ENCODE measurements at regions of chr5 and their contacts with region 1.

Region 1: GRCh38 chr5:178732281-178732680 is 1.8 kb upstream of the ZNF354A start:
- DNase-seq: no peak
- ATAC-seq: no peak
- H3K4me3 ChIP-seq: no peak overlapping the region
- H3K27ac ChIP-seq: no peak overlapping the region
- H3K4me1 ChIP-seq: peaks cover 8% of the 10 kb centered on the region; the same call in 1 of the 2 replicates
- H3K27me3 ChIP-seq: no peaks in the 10 kb centered on the region
- CTCF ChIP-seq: no peak
- EP300 ChIP-seq: no peak
- POLR2A ChIP-seq: no peak
- RAD21 ChIP-seq: no peak

Region 2: GRCh38 chr5:178626484-178627258 is 105.6 kb before region 1 on chr5 and contains the start of gene CLK4:
- CTCF ChIA-PET with region 1: no interaction called
- POLR2A ChIA-PET with region 1: interaction called, 3 read pairs
- in situ Hi-C with region 1: no loop called
- intact Hi-C with region 1: loop called (anchors 5 kb)
- DNase-seq: peak; percentile 78
- ATAC-seq: peak; percentile 78
- H3K4me3 ChIP-seq: peak within 1 kb of the TSS; percentile 88 to 95 (median 91)
- H3K27ac ChIP-seq: peak within 1 kb of the TSS; percentile 90
- H3K4me1 ChIP-seq: peaks cover 60% of the 10 kb centered on the region
- H3K27me3 ChIP-seq: no peaks in the 10 kb centered on the region; a peak in 1 of 5 replicates
- CTCF ChIP-seq: 0 out of 2 replicates have a peak, but pooled peaks have one; percentile 3
- EP300 ChIP-seq: no peak
- POLR2A ChIP-seq: peak; percentile 84 to 87
- RAD21 ChIP-seq: no peak; the same call in 1 of the 2 replicates
- total RNA-seq, gene CLK4: 9.5 and 18.4 TPM in 2 replicates

Region 3: GRCh38 chr5:178940569-178941360 is 208.5 kb after region 1 on chr5 and contains the start of gene ZNF454:
- CTCF ChIA-PET with region 1: no interaction called
- POLR2A ChIA-PET with region 1: no interaction called
- in situ Hi-C with region 1: no loop called
- intact Hi-C with region 1: no loop called
- DNase-seq: no peak
- ATAC-seq: no peak
- H3K4me3 ChIP-seq: no peak within 1 kb of the TSS
- H3K27ac ChIP-seq: no peak within 1 kb of the TSS
- H3K4me1 ChIP-seq: no peaks in the 10 kb centered on the region
- H3K27me3 ChIP-seq: no peaks in the 10 kb centered on the region
- CTCF ChIP-seq: no peak
- EP300 ChIP-seq: no peak
- POLR2A ChIP-seq: no peak
- RAD21 ChIP-seq: no peak
- total RNA-seq, gene ZNF454: not detected in 2 replicates

Region 4: GRCh38 chr5:179166886-179167841 is 434.9 kb after region 1 on chr5:
- CTCF ChIA-PET with region 1: no interaction called
- POLR2A ChIA-PET with region 1: no interaction called
- in situ Hi-C with region 1: no loop called
- intact Hi-C with region 1: no loop called
- DNase-seq: no peak
- ATAC-seq: peak; percentile 80
- H3K4me3 ChIP-seq: peak overlapping the region in 1 of 3 experiments; percentile 50; a peak in 1 of 6 replicates
- H3K27ac ChIP-seq: no peak overlapping the region
- H3K4me1 ChIP-seq: no peaks in the 10 kb centered on the region
- H3K27me3 ChIP-seq: peaks cover 3 to 12% of the 10 kb centered on the region in 2 experiments; a peak in 3 of 5 replicates
- CTCF ChIP-seq: peak; percentile 76
- EP300 ChIP-seq: no peak
- POLR2A ChIP-seq: no peak
- RAD21 ChIP-seq: peak; percentile 97

Region 5: GRCh38 chr5:180172450-180173197 is 1440.3 kb after region 1 on chr5:
- CTCF ChIA-PET with region 1: no interaction called
- POLR2A ChIA-PET with region 1: no interaction called
- in situ Hi-C with region 1: no loop called
- intact Hi-C with region 1: no loop called
- DNase-seq: peak; percentile 73
- ATAC-seq: peak; percentile 59
- H3K4me3 ChIP-seq: no peak overlapping the region; a peak in 1 of 6 replicates
- H3K27ac ChIP-seq: no peak overlapping the region
- H3K4me1 ChIP-seq: peaks cover 30% of the 10 kb centered on the region
- H3K27me3 ChIP-seq: peaks cover 0 to 30% of the 10 kb centered on the region in 2 experiments; a peak in 4 of 5 replicates
- CTCF ChIP-seq: no peak
- EP300 ChIP-seq: no peak
- POLR2A ChIP-seq: no peak
- RAD21 ChIP-seq: no peak